ENCODE measurements at regions of chr9 and their contacts with region 1.

Region 1: DNA sequence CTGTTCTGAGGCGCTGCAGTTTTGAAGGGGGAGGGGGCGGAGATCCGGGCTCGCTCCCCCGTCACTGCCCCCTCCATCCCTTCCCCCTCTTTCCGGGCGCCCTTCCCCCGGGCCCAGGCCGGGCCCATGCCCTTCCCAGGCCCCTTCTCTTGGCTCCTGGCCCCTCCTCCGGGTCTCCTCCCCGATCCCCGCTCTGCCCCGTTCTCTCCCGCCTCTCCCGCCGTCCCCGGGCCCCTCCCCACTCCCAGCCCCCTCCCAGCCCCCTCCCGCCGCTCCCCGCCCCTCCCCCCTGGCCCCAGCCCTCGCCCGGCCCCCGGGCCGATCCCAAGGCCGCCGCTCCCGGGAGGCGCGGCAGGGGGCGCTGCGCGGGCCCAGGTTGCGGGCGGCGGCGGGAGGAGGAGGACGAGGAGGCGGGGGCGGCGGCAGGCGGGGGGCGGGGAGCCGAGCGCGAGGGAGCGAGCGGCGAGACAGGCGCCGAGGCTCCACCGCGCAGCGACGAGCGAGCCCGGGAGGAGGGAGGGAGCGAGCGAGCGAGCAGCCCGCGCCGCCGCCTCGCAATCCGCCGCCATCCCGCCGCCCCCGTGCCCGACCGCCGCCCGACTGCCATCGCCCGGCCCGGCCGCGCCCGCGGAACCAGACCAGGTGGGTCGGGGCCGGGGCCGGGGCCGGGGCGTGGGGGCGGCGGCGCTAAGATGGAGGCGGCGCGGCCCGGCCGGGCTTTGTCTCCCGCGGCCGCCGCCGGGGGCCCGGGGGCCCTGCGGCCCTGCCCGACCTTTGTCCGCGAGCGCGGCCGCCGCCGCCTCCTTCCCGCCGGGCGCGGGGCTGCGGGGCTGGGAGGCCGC is at the start of gene PRRC2B:
- DNase-seq: peak; percentile 62

Region 2: DNA sequence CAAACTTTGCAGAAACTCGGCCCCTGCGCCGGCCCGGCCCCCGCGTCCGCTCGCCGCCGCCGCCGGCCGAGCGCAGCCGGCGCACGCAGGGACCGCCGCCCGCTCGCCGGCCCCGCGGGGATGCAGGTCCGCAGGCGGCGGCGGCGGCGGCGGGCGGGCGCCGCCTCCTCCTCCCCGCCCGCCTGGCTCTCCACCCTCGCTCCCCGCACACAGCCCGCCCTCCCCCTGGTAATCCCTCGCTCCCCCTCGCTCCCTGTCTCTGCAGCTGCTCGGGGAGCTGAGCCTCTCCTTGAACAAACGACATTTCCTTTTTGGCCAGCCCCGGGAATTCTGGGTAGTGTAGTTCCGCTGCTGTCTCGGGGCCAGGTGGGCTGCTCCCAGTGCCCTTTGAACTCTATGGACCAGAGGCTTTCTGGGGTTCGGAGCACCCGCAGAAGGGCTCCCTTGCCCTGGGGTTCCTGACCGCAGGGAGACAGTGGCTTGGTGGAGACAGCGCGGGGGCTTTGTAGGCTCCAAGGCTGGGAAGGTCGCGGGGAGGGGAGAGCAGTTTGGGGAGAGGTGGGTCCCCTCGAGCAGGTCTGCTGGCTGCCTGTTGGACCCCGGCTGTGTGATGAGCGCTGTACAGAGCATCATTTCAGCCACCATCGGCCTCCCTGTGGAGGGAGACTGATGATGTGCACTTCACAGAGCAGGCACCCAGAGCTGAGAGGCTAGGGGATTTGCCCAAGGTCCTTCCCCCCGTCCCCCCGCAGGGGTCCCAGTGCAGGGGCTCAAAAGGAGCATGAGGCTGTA is 115.7 kb before region 1 on chr9:
- in situ Hi-C with region 1: loop called (anchors 25 kb)
- DNase-seq: peak; percentile 70

Region 3: GRCh38 chr9:131739980-131740648 is 346.3 kb after region 1 on chr9 and contains the start of gene RAPGEF1:
- in situ Hi-C with region 1: loop called (anchors 25 kb)
- DNase-seq: no peak